ENCODE measurements at regions of chr20 and their contacts with region 1.

Region 1: DNA sequence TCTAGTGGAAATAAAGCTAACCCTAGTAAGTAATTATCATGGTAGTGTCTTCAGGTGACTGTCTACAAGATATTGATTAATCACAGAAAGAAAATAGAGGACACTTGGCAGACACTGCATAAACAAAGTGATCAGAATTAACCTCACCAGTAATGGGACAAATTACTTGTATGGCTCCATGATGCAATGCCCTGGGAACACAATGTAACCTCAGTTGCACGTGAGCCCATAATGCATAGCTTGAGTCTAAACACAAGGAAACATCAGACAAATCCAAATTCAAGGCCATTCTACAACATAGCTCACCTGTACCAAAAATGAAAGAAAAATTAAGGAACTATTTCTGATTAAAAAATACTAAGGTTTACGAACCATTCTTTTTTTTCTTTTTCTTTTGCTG is 92.4 kb upstream of the SSTR4 start:
- DNase-seq: no peak

Region 2: DNA sequence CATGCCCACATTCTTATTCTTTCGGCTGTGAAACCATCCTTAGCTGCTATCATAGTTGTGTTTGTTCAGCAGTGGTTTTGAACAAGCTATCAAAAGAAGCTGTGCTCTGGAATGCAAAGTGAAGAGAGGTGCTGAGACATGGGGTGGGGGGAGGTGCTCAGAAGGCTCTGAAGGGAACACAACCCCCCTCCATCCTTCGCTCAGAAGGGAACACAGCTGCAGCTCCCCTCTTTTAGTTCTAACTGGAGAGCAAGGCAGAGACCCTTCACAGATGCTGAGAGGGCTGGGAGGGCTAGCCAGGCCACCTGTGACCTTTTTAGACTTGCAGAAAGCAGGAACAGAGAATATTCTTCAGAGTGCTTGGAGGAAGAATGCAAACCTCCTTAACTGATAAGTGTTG is 74.8 kb after region 1 on chr20:
- intact Hi-C with region 1: loop called in 1 of 2 experiments (anchors 2 kb)
- DNase-seq: no peak

Measured in posterior vena cava (tissue), 2 donors.